Naive thymus-derived CD4-positive, alpha-beta T cell (primary cell): ENCODE measurements at regions of chr4 and their contacts with region 1.

Region 1: DNA sequence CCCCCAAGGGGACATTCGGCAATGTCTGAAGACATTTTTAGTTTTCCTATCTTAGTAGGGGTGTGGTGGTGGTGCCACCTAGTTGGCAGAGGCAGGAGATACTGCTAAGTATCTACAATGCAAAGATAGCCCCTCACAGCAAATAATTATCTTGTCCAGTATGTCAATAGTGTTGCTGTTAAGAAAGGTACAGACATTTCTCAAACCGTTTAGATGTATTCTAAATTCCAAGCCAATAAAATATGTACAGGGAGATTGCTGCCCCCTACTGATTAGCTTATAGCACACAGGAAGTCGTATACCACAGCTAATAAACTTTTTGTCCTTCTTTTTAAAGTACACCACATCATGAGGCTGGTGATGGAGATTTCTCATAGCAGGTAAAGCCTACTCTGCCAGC is 260.5 kb downstream of the TMA16 start:
- DNase-seq: peak in 5 of 9 donors; percentile 24 to 50 (median 40)
- ATAC-seq: peak; percentile 54
- H3K4me3 ChIP-seq: no peak overlapping the region
- H3K4me3 Mint-ChIP-seq: peak overlapping the region in 7 of 10 donors; percentile 6 to 67 (median 38)
- H3K27ac ChIP-seq: no peak overlapping the region
- H3K27ac Mint-ChIP-seq: no peak overlapping the region
- H3K4me1 ChIP-seq: no peaks in the 10 kb centered on the region
- H3K4me1 Mint-ChIP-seq: peaks cover 0 to 9% (median 8%) of the 10 kb centered on the region in 7 donors
- H3K27me3 ChIP-seq: no peaks in the 10 kb centered on the region
- H3K27me3 Mint-ChIP-seq: peaks cover 0 to 4% (median 0%) of the 10 kb centered on the region in 5 donors

Region 2: DNA sequence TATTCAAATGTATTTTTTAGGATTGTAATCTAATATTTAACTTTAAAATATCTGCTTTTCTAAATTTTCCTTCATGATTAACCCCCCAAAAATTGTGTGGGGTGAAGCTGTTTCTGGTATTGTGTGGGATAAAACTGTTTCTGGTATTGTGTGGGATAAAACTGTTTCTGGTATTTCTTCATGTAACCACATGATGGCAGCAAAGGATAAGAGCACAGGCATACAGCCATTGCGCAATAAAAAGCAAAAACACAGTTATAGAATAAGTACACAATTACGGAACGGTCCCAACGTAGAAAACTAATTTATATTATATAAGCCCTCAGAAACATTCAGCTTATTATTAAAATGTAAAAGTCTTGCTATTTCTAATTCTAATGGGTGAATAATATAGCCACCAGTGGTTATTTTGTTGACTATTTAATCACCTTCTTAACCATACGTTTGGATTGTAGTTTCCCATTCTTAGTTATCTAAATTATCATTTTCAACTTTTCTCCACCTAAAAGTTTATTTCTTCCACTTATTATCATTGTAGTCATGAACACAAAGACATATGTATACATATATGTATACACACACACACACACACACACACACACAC is 1257.3 kb before region 1 on chr4:
- CTCF ChIA-PET with region 1: no interaction called
- POLR2A ChIA-PET with region 1: no interaction called
- intact Hi-C with region 1: loop called in 1 of 2 experiments (anchors 2 kb)
- DNase-seq: peak in 6 of 9 donors; percentile 11 to 43 (median 30)
- ATAC-seq: peak; percentile 71
- H3K4me3 ChIP-seq: no peak overlapping the region
- H3K4me3 Mint-ChIP-seq: no peak overlapping the region
- H3K27ac ChIP-seq: no peak overlapping the region
- H3K27ac Mint-ChIP-seq: no peak overlapping the region
- H3K4me1 ChIP-seq: no peaks in the 10 kb centered on the region
- H3K4me1 Mint-ChIP-seq: no peaks in the 10 kb centered on the region
- H3K27me3 ChIP-seq: no peaks in the 10 kb centered on the region
- H3K27me3 Mint-ChIP-seq: peaks cover 0 to 11% (median 0%) of the 10 kb centered on the region in 5 donors

Region 3: GRCh38 chr4:163484906-163485305 is 270.1 kb before region 1 on chr4:
- CTCF ChIA-PET with region 1: no interaction called
- POLR2A ChIA-PET with region 1: no interaction called
- intact Hi-C with region 1: loop called in 1 of 2 experiments (anchors 2 kb)
- DNase-seq: peak in 8 of 9 donors; percentile 14 to 50 (median 36)
- ATAC-seq: peak; percentile 74
- H3K4me3 ChIP-seq: no peak overlapping the region
- H3K4me3 Mint-ChIP-seq: no peak overlapping the region
- H3K27ac ChIP-seq: no peak overlapping the region
- H3K27ac Mint-ChIP-seq: no peak overlapping the region
- H3K4me1 ChIP-seq: no peaks in the 10 kb centered on the region
- H3K4me1 Mint-ChIP-seq: peaks cover 0 to 6% (median 0%) of the 10 kb centered on the region in 7 donors
- H3K27me3 ChIP-seq: no peaks in the 10 kb centered on the region
- H3K27me3 Mint-ChIP-seq: peaks cover 4 to 21% (median 10%) of the 10 kb centered on the region in 5 donors

Region 4: GRCh38 chr4:163494360-163495162 is 260.5 kb before region 1 on chr4 and contains the start of gene TMA16:
- CTCF ChIA-PET with region 1: no interaction called
- POLR2A ChIA-PET with region 1: no interaction called
- intact Hi-C with region 1: loop called in 1 of 2 experiments (anchors 5 kb)
- DNase-seq: peak; percentile 56 to 87 (median 76)
- ATAC-seq: peak; percentile 89
- H3K4me3 ChIP-seq: peak within 1 kb of the TSS; percentile 94
- H3K4me3 Mint-ChIP-seq: peak within 1 kb of the TSS; percentile 92 to 100 (median 98)
- H3K27ac ChIP-seq: peak within 1 kb of the TSS; percentile 83
- H3K27ac Mint-ChIP-seq: peak within 1 kb of the TSS; percentile 78 to 99 (median 96)
- H3K4me1 ChIP-seq: peaks cover 7% of the 10 kb centered on the region in 2 donors
- H3K4me1 Mint-ChIP-seq: peaks cover 20 to 44% (median 36%) of the 10 kb centered on the region in 7 donors
- H3K27me3 ChIP-seq: no peaks in the 10 kb centered on the region
- H3K27me3 Mint-ChIP-seq: peaks cover 0 to 12% (median 5%) of the 10 kb centered on the region in 5 donors
- total RNA-seq, gene TMA16: 10.5 to 38.7 (median 20.7) TPM

Region 5: GRCh38 chr4:163663454-163664225 is 91.4 kb before region 1 on chr4:
- CTCF ChIA-PET with region 1: no interaction called
- POLR2A ChIA-PET with region 1: no interaction called
- intact Hi-C with region 1: no loop called
- DNase-seq: no peak
- ATAC-seq: no peak
- H3K4me3 ChIP-seq: no peak overlapping the region
- H3K4me3 Mint-ChIP-seq: peak overlapping the region in 5 of 10 donors; percentile 8 to 51 (median 28)
- H3K27ac ChIP-seq: no peak overlapping the region
- H3K27ac Mint-ChIP-seq: peak overlapping the region in 3 of 9 donors; percentile 24 to 63 (median 31)
- H3K4me1 ChIP-seq: peaks cover 2 to 35% of the 10 kb centered on the region in 2 donors
- H3K4me1 Mint-ChIP-seq: peaks cover 2 to 71% (median 52%) of the 10 kb centered on the region in 7 donors
- H3K27me3 ChIP-seq: no peaks in the 10 kb centered on the region
- H3K27me3 Mint-ChIP-seq: no peaks in the 10 kb centered on the region

Region 6: GRCh38 chr4:163681208-163681821 is 73.7 kb before region 1 on chr4:
- CTCF ChIA-PET with region 1: no interaction called
- POLR2A ChIA-PET with region 1: no interaction called
- intact Hi-C with region 1: loop called in 1 of 2 experiments (anchors 1 kb)
- DNase-seq: peak in 7 of 9 donors; percentile 53 to 72 (median 69)
- ATAC-seq: peak; percentile 92
- H3K4me3 ChIP-seq: no peak overlapping the region
- H3K4me3 Mint-ChIP-seq: no peak overlapping the region
- H3K27ac ChIP-seq: no peak overlapping the region
- H3K27ac Mint-ChIP-seq: no peak overlapping the region
- H3K4me1 ChIP-seq: peaks cover 0 to 4% of the 10 kb centered on the region in 2 donors
- H3K4me1 Mint-ChIP-seq: peaks cover 0 to 31% (median 10%) of the 10 kb centered on the region in 7 donors
- H3K27me3 ChIP-seq: no peaks in the 10 kb centered on the region
- H3K27me3 Mint-ChIP-seq: peaks cover 0 to 4% (median 0%) of the 10 kb centered on the region in 5 donors

Region 7: GRCh38 chr4:164731827-164732474 is 976.9 kb after region 1 on chr4:
- CTCF ChIA-PET with region 1: no interaction called
- POLR2A ChIA-PET with region 1: no interaction called
- intact Hi-C with region 1: loop called in 1 of 2 experiments (anchors 2 kb)
- DNase-seq: peak; percentile 10 to 46 (median 39)
- ATAC-seq: peak; percentile 58
- H3K4me3 ChIP-seq: no peak overlapping the region
- H3K4me3 Mint-ChIP-seq: no peak overlapping the region
- H3K27ac ChIP-seq: no peak overlapping the region
- H3K27ac Mint-ChIP-seq: no peak overlapping the region
- H3K4me1 ChIP-seq: no peaks in the 10 kb centered on the region
- H3K4me1 Mint-ChIP-seq: peaks cover 0 to 4% (median 0%) of the 10 kb centered on the region in 7 donors
- H3K27me3 ChIP-seq: no peaks in the 10 kb centered on the region
- H3K27me3 Mint-ChIP-seq: peaks cover 10 to 16% (median 15%) of the 10 kb centered on the region in 5 donors

Region 8: DNA sequence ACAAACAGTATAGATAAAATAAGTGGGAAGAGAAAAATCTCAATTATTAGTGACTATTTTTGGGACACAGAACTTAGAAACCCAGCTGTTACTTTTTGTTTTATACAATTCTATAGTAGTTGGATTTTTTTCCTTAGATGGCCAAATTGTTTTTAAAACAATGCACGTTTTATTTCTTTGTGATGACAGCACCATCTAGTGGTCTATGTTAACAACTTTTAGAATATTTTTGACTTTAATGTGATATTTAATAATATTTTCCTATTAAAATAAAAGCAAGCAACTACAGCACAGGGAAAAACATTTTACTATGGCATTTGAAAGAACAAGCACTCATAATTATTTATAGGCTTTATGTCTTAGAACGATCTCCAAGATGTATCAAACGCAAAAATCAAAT is 993.4 kb after region 1 on chr4:
- CTCF ChIA-PET with region 1: no interaction called
- POLR2A ChIA-PET with region 1: no interaction called
- intact Hi-C with region 1: loop called in 1 of 2 experiments (anchors 5 kb)
- DNase-seq: peak in 1 of 9 donors; percentile 8
- ATAC-seq: no peak
- H3K4me3 ChIP-seq: no peak overlapping the region
- H3K4me3 Mint-ChIP-seq: no peak overlapping the region
- H3K27ac ChIP-seq: no peak overlapping the region
- H3K27ac Mint-ChIP-seq: no peak overlapping the region
- H3K4me1 ChIP-seq: no peaks in the 10 kb centered on the region
- H3K4me1 Mint-ChIP-seq: no peaks in the 10 kb centered on the region
- H3K27me3 ChIP-seq: no peaks in the 10 kb centered on the region
- H3K27me3 Mint-ChIP-seq: peaks cover 0 to 23% (median 9%) of the 10 kb centered on the region in 5 donors